ENCODE measurements at regions of chr6 and their contacts with region 1.

Region 1: GRCh38 chr6:391559-392440 is at the start of gene IRF4:
- DNase-seq: peak in 6 of 9 donors; percentile 20 to 87 (median 32)
- ATAC-seq: peak; percentile 66
- H3K4me3 ChIP-seq: peak within 1 kb of the TSS; percentile 72
- H3K4me3 Mint-ChIP-seq: peak within 1 kb of the TSS; percentile 88 to 100 (median 96)
- H3K27ac ChIP-seq: peak within 1 kb of the TSS; percentile 60
- H3K27ac Mint-ChIP-seq: peak within 1 kb of the TSS in 8 of 9 donors; percentile 21 to 98 (median 69)
- H3K4me1 ChIP-seq: peaks cover 13 to 16% of the 10 kb centered on the region in 2 donors
- H3K4me1 Mint-ChIP-seq: peaks cover 20 to 56% (median 31%) of the 10 kb centered on the region in 7 donors
- H3K27me3 ChIP-seq: no peaks in the 10 kb centered on the region
- H3K27me3 Mint-ChIP-seq: peaks cover 0 to 24% (median 3%) of the 10 kb centered on the region in 5 donors
- total RNA-seq, gene IRF4: 11.8 to 175 (median 27.1) TPM

Region 2: GRCh38 chr6:219641-220198 is 172.1 kb before region 1 on chr6:
- CTCF ChIA-PET with region 1: no interaction called
- POLR2A ChIA-PET with region 1: no interaction called
- intact Hi-C with region 1: no loop called
- DNase-seq: peak in 1 of 9 donors; percentile 18
- ATAC-seq: peak; percentile 69
- H3K4me3 ChIP-seq: no peak overlapping the region
- H3K4me3 Mint-ChIP-seq: no peak overlapping the region
- H3K27ac ChIP-seq: no peak overlapping the region
- H3K27ac Mint-ChIP-seq: no peak overlapping the region
- H3K4me1 ChIP-seq: peaks cover 5 to 12% of the 10 kb centered on the region in 2 donors
- H3K4me1 Mint-ChIP-seq: peaks cover 14 to 76% (median 23%) of the 10 kb centered on the region in 7 donors
- H3K27me3 ChIP-seq: no peaks in the 10 kb centered on the region
- H3K27me3 Mint-ChIP-seq: no peaks in the 10 kb centered on the region

Region 3: GRCh38 chr6:291697-292505 is 99.9 kb before region 1 on chr6 and contains the start of gene DUSP22:
- CTCF ChIA-PET with region 1: no interaction called
- POLR2A ChIA-PET with region 1: interaction called, 7 read pairs
- intact Hi-C with region 1: loop called (anchors 1 kb)
- DNase-seq: peak; percentile 52 to 95 (median 78)
- ATAC-seq: peak; percentile 74
- H3K4me3 ChIP-seq: peak within 1 kb of the TSS; percentile 63
- H3K4me3 Mint-ChIP-seq: peak within 1 kb of the TSS; percentile 85 to 97 (median 93)
- H3K27ac ChIP-seq: peak within 1 kb of the TSS; percentile 82
- H3K27ac Mint-ChIP-seq: peak within 1 kb of the TSS; percentile 86 to 98 (median 94)
- H3K4me1 ChIP-seq: peaks cover 9 to 26% of the 10 kb centered on the region in 2 donors
- H3K4me1 Mint-ChIP-seq: peaks cover 31 to 63% (median 47%) of the 10 kb centered on the region in 7 donors
- H3K27me3 ChIP-seq: no peaks in the 10 kb centered on the region
- H3K27me3 Mint-ChIP-seq: no peaks in the 10 kb centered on the region
- total RNA-seq, gene DUSP22: 24.8 to 57.2 (median 51.0) TPM

Region 4: DNA sequence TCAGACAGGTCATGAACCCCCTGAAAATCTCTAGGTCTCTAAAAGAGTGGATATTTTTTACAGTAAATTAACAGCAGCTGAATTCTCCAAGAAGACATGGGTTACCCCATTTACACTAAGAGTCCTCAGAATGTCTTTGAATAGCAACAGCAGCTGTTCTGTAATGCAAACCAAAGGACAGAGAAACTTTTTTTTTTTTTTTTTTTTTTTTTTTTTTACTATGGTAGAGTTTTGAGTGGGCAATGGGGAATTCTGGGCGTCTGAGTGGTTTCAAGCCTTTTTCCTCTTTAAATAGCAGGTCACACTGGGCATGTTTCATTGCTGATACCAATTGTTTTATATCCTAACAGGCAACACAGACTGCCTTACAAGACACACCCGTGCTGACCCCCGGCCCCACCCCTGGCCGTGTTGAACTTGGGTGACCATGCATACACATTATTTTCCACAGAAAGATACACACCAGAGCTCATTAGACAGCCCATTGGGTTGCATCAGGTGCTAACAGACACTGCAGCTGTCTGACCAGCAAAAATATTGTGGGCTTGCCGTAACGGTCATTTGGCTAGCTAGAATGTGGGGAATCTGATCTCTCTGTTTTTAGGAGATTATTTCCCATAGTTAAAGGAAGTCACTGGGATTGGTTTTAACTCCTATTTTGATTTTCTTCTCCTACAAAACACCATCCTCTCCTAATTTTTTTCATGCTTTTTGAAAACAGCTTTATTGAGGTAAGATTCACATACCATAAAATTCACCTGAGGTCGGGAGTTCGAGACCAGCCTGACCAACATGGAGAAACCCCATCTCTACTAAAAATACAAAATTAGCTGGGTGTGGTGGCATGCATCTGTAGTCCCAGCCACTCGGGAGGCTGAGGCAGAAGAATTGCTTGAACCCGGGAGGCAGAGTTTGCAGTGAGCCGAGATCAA is 26.9 kb before region 1 on chr6:
- CTCF ChIA-PET with region 1: no interaction called
- POLR2A ChIA-PET with region 1: no interaction called
- intact Hi-C with region 1: no loop called
- DNase-seq: no peak
- ATAC-seq: no peak
- H3K4me3 ChIP-seq: no peak overlapping the region
- H3K4me3 Mint-ChIP-seq: no peak overlapping the region
- H3K27ac ChIP-seq: no peak overlapping the region
- H3K27ac Mint-ChIP-seq: no peak overlapping the region
- H3K4me1 ChIP-seq: no peaks in the 10 kb centered on the region
- H3K4me1 Mint-ChIP-seq: peaks cover 0 to 2% (median 0%) of the 10 kb centered on the region in 7 donors
- H3K27me3 ChIP-seq: no peaks in the 10 kb centered on the region
- H3K27me3 Mint-ChIP-seq: peaks cover 0 to 18% (median 7%) of the 10 kb centered on the region in 5 donors

Region 5: GRCh38 chr6:474453-475185 is 82.8 kb after region 1 on chr6:
- CTCF ChIA-PET with region 1: no interaction called
- POLR2A ChIA-PET with region 1: interaction called, 4 read pairs
- intact Hi-C with region 1: loop called (anchors 1 kb)
- DNase-seq: peak; percentile 25 to 75 (median 72)
- ATAC-seq: peak; percentile 95
- H3K4me3 ChIP-seq: peak overlapping the region; percentile 36
- H3K4me3 Mint-ChIP-seq: peak overlapping the region; percentile 9 to 82 (median 72)
- H3K27ac ChIP-seq: peak overlapping the region; percentile 47
- H3K27ac Mint-ChIP-seq: peak overlapping the region; percentile 7 to 83 (median 60)
- H3K4me1 ChIP-seq: peaks cover 14 to 22% of the 10 kb centered on the region in 2 donors
- H3K4me1 Mint-ChIP-seq: peaks cover 25 to 76% (median 58%) of the 10 kb centered on the region in 7 donors
- H3K27me3 ChIP-seq: no peaks in the 10 kb centered on the region
- H3K27me3 Mint-ChIP-seq: no peaks in the 10 kb centered on the region

Region 6: GRCh38 chr6:524803-525202 is 133.0 kb after region 1 on chr6:
- CTCF ChIA-PET with region 1: interaction called, 4 read pairs
- POLR2A ChIA-PET with region 1: interaction called, 4 read pairs
- intact Hi-C with region 1: loop called (anchors 1 kb)
- DNase-seq: peak in 2 of 9 donors; percentile 15 to 16
- ATAC-seq: peak; percentile 41
- H3K4me3 ChIP-seq: no peak overlapping the region
- H3K4me3 Mint-ChIP-seq: no peak overlapping the region
- H3K27ac ChIP-seq: no peak overlapping the region
- H3K27ac Mint-ChIP-seq: peak overlapping the region in 6 of 9 donors; percentile 15 to 90 (median 48)
- H3K4me1 ChIP-seq: no peaks in the 10 kb centered on the region
- H3K4me1 Mint-ChIP-seq: peaks cover 5 to 19% (median 13%) of the 10 kb centered on the region in 7 donors
- H3K27me3 ChIP-seq: no peaks in the 10 kb centered on the region
- H3K27me3 Mint-ChIP-seq: no peaks in the 10 kb centered on the region

Region 7: GRCh38 chr6:593139-593906 is 201.5 kb after region 1 on chr6:
- CTCF ChIA-PET with region 1: interaction called, 10 read pairs
- POLR2A ChIA-PET with region 1: no interaction called
- intact Hi-C with region 1: loop called (anchors 2 to 5 kb)
- DNase-seq: peak; percentile 20 to 69 (median 62)
- ATAC-seq: peak; percentile 78
- H3K4me3 ChIP-seq: no peak overlapping the region
- H3K4me3 Mint-ChIP-seq: no peak overlapping the region
- H3K27ac ChIP-seq: no peak overlapping the region
- H3K27ac Mint-ChIP-seq: peak overlapping the region in 1 of 9 donors; percentile 44
- H3K4me1 ChIP-seq: no peaks in the 10 kb centered on the region
- H3K4me1 Mint-ChIP-seq: peaks cover 0 to 19% (median 0%) of the 10 kb centered on the region in 7 donors
- H3K27me3 ChIP-seq: no peaks in the 10 kb centered on the region
- H3K27me3 Mint-ChIP-seq: no peaks in the 10 kb centered on the region

Region 8: DNA sequence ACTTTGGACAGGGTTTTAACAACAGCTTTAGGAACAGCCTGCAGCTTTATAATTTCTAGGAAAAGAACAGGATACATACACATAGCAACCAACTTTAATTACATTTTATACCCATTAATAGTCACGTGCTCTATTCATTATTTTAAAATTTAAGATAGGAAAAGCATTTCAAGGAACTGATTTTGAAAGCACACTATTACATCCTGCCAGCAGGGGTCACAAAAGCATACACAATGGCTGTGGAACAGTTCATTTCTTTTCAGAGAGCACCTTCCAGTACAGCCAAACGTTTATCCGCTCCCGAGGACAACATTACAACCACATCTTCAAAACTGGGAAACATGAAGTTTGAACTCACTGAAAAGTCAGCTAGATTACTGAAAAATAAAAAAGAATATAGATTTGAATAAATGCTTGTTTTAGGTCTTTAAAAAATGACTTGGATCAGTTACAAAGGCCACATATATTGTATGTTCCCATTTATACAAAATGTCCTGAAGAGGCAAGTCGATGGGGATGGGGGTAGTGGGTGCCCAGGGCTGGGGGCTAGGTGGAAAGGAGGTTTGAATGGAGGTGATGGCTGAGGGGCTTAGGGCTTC is 405.8 kb after region 1 on chr6:
- CTCF ChIA-PET with region 1: no interaction called
- POLR2A ChIA-PET with region 1: no interaction called
- intact Hi-C with region 1: loop called in 1 of 2 experiments (anchors 10 kb)
- DNase-seq: peak in 5 of 9 donors; percentile 18 to 36 (median 22)
- ATAC-seq: peak; percentile 61
- H3K4me3 ChIP-seq: no peak overlapping the region
- H3K4me3 Mint-ChIP-seq: no peak overlapping the region
- H3K27ac ChIP-seq: no peak overlapping the region
- H3K27ac Mint-ChIP-seq: no peak overlapping the region
- H3K4me1 ChIP-seq: no peaks in the 10 kb centered on the region
- H3K4me1 Mint-ChIP-seq: no peaks in the 10 kb centered on the region
- H3K27me3 ChIP-seq: peaks cover 0 to 11% of the 10 kb centered on the region in 2 donors
- H3K27me3 Mint-ChIP-seq: peaks cover 47 to 67% (median 51%) of the 10 kb centered on the region in 5 donors

Measured in naive thymus-derived CD4-positive, alpha-beta T cell (primary cell).